Sigmoid colon (tissue), 7 donors: ENCODE measurements at regions of chr12 and their contacts with region 1.

Region 1: GRCh38 chr12:45215419-45216229 is at the start of gene ANO6:
- DNase-seq: peak; percentile 96
- H3K4me3 ChIP-seq: peak within 1 kb of the TSS; percentile 67 to 91 (median 80)
- H3K27ac ChIP-seq: peak within 1 kb of the TSS; percentile 93 to 97 (median 96)
- H3K4me1 ChIP-seq: peaks cover 0 to 43% (median 27%) of the 10 kb centered on the region in 4 donors
- H3K27me3 ChIP-seq: no peaks in the 10 kb centered on the region
- CTCF ChIP-seq: peak in 1 of 4 experiments; percentile 5
- EP300 ChIP-seq: no peak
- POLR2A ChIP-seq: peak; percentile 81 to 92
- total RNA-seq, gene ANO6: 98.5 to 107 (median 103) TPM

Region 2: GRCh38 chr12:43945983-43946382 is 1269.6 kb before region 1 on chr12:
- intact Hi-C with region 1: no loop called
- DNase-seq: no peak
- H3K4me3 ChIP-seq: no peak overlapping the region
- H3K27ac ChIP-seq: no peak overlapping the region
- H3K4me1 ChIP-seq: no peaks in the 10 kb centered on the region
- H3K27me3 ChIP-seq: no peaks in the 10 kb centered on the region
- CTCF ChIP-seq: no peak
- EP300 ChIP-seq: no peak
- POLR2A ChIP-seq: no peak

Region 3: GRCh38 chr12:44960856-44961255 is 254.8 kb before region 1 on chr12:
- intact Hi-C with region 1: no loop called
- DNase-seq: no peak
- H3K4me3 ChIP-seq: no peak overlapping the region
- H3K27ac ChIP-seq: no peak overlapping the region
- H3K4me1 ChIP-seq: no peaks in the 10 kb centered on the region
- H3K27me3 ChIP-seq: no peaks in the 10 kb centered on the region
- CTCF ChIP-seq: no peak
- EP300 ChIP-seq: no peak
- POLR2A ChIP-seq: no peak

Region 4: GRCh38 chr12:45170456-45171042 is 45.1 kb before region 1 on chr12:
- intact Hi-C with region 1: loop called (anchors 5 kb)
- DNase-seq: peak; percentile 87
- H3K4me3 ChIP-seq: no peak overlapping the region
- H3K27ac ChIP-seq: no peak overlapping the region
- H3K4me1 ChIP-seq: no peaks in the 10 kb centered on the region
- H3K27me3 ChIP-seq: no peaks in the 10 kb centered on the region
- CTCF ChIP-seq: peak; percentile 56 to 86 (median 78)
- EP300 ChIP-seq: no peak
- POLR2A ChIP-seq: no peak

Region 5: DNA sequence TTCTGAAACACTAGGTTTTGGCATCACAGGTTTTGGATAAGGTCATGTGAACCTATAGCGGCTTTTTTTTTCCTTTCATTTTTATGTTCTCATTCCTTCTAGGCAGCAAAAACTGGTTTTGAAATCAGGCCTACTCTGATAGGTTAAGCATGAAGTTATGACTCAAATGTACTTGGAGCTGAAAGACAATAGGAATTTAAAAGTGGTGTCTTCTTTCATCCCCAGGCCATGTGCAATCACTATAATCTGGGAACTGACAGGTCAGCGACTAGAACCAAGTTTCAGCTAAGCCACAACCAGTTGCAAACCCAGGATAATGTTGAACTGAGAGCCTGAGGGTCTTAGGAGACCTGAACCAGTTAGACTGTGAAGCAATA is 74.6 kb after region 1 on chr12:
- intact Hi-C with region 1: loop called (anchors 5 kb)
- DNase-seq: no peak
- H3K4me3 ChIP-seq: no peak overlapping the region
- H3K27ac ChIP-seq: peak overlapping the region; percentile 78 to 87 (median 82)
- H3K4me1 ChIP-seq: peaks cover 0 to 57% (median 41%) of the 10 kb centered on the region in 4 donors
- H3K27me3 ChIP-seq: no peaks in the 10 kb centered on the region
- CTCF ChIP-seq: no peak
- EP300 ChIP-seq: no peak
- POLR2A ChIP-seq: no peak

Region 6: GRCh38 chr12:45354399-45354798 is 138.8 kb after region 1 on chr12:
- intact Hi-C with region 1: loop called (anchors 10 kb)
- DNase-seq: no peak
- H3K4me3 ChIP-seq: no peak overlapping the region
- H3K27ac ChIP-seq: no peak overlapping the region
- H3K4me1 ChIP-seq: peaks cover 0 to 35% (median 25%) of the 10 kb centered on the region in 4 donors
- H3K27me3 ChIP-seq: no peaks in the 10 kb centered on the region
- CTCF ChIP-seq: no peak
- EP300 ChIP-seq: no peak
- POLR2A ChIP-seq: no peak

Region 7: GRCh38 chr12:45388545-45388944 is 172.9 kb after region 1 on chr12:
- intact Hi-C with region 1: loop called (anchors 1 kb)
- DNase-seq: no peak
- H3K4me3 ChIP-seq: no peak overlapping the region
- H3K27ac ChIP-seq: no peak overlapping the region
- H3K4me1 ChIP-seq: no peaks in the 10 kb centered on the region
- H3K27me3 ChIP-seq: no peaks in the 10 kb centered on the region
- CTCF ChIP-seq: peak; percentile 45 to 67 (median 60)
- EP300 ChIP-seq: no peak
- POLR2A ChIP-seq: no peak